Activated CD8-positive, alpha-beta memory T cell treated with anti-CD3 and anti-CD28 coated beads, Interleukin-2, amount 10 ng/mL, durations not matched to agents 7 days and 5 days (primary cell): ENCODE measurements at regions of chr2 and their contacts with region 1.

Region 1: DNA sequence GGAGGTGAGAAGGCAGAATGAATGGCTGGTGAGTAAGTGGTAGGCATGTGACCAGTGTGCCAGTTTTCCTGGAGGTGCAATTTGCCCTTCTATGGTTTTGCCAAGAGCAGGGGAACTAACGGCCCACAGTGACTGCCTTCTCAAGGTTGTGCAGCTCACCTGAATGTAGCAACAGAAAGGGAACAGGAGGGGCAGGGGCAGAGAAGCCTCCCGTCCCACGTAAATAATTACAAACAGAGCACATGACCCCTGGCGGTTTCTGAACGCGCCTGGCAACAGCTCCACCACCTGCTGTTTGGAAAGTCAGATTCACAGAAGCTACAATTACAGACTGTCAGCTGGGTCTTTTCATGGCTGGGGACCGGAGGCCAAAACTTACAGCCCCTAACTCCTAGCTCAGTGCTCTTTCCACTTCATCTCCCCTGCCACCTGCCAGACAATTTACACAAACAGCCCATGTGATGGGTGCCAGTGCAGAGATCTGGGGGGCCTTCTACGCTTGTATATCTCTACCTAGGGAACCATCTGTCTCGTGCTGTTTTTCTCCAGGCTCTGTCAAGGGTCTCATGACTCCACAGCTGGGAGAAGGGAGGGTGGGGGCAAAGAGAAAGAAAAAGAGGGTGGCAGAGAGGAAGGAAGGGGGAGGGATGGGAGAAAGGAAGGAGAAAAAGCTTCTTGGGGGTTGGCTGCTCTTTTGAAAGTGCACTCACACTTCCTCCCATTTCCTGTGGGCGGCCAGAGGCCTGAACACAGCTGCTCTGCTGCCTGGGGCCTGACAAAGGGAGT is 69.6 kb downstream of the POLR1A start:
- DNase-seq: peak; percentile 89
- ATAC-seq: peak; percentile 48
- H3K4me3 Mint-ChIP-seq: peak overlapping the region; percentile 63
- H3K27ac Mint-ChIP-seq: peak overlapping the region; percentile 95
- H3K4me1 Mint-ChIP-seq: peaks cover 72% of the 10 kb centered on the region
- H3K27me3 Mint-ChIP-seq: no peaks in the 10 kb centered on the region

Region 2: GRCh38 chr2:85999061-85999831 is 36.8 kb before region 1 on chr2:
- CTCF ChIA-PET with region 1: interaction called, 39 read pairs
- DNase-seq: peak; percentile 85
- ATAC-seq: peak; percentile 92
- H3K4me3 Mint-ChIP-seq: peak overlapping the region; percentile 56
- H3K27ac Mint-ChIP-seq: peak overlapping the region; percentile 95
- H3K4me1 Mint-ChIP-seq: peaks cover 72% of the 10 kb centered on the region
- H3K27me3 Mint-ChIP-seq: no peaks in the 10 kb centered on the region

Region 3: DNA sequence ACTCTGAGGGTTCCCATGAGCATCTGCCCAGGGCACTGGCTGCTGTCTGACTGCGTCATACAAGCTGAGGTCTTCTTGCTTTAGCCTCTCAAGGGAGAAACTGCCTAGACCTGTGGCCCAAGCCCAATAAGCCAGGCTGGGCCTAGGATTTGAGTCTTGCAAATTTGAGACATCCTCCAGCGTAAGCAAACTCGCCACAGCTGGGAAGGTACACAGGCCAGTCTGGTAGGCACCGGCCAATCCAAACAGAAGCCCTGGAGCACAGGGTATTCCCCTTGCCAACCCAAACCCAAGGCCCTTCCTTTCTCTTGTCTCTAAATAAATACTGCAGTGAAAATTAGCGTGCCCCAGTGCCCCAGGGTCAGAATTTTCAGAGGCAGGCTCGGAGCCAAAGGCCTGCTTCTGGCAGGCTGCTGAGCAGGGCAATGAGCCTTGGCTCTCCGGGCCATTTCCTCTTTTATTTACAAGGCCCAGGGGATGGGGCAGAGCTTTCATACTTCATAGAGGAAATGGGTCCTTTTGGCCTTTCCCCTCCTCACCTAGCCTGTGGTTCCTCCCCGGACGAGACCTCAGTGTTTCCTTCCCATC is 36.3 kb after region 1 on chr2:
- CTCF ChIA-PET with region 1: interaction called, 43 read pairs
- DNase-seq: no peak
- ATAC-seq: no peak
- H3K4me3 Mint-ChIP-seq: no peak overlapping the region
- H3K27ac Mint-ChIP-seq: peak overlapping the region; percentile 58
- H3K4me1 Mint-ChIP-seq: peaks cover 33% of the 10 kb centered on the region
- H3K27me3 Mint-ChIP-seq: no peaks in the 10 kb centered on the region